H1 (cell line): ENCODE measurements at regions of chr6 and their contacts with region 1.

Region 1: GRCh38 chr6:33802186-33803064 is 1.4 kb downstream of the MLN start:
- DNase-seq: no peak
- H3K4me3 ChIP-seq: no peak overlapping the region
- H3K27ac ChIP-seq: no peak overlapping the region
- H3K4me1 ChIP-seq: peaks cover 0 to 10% (median 3%) of the 10 kb centered on the region in 4 experiments; a peak in 5 of 7 replicates
- H3K27me3 ChIP-seq: peaks cover 0 to 6% (median 1%) of the 10 kb centered on the region in 4 experiments; a peak in 3 of 7 replicates
- CTCF ChIP-seq: no peak
- EP300 ChIP-seq: no peak
- POLR2A ChIP-seq: no peak
- RAD21 ChIP-seq: no peak

Region 2: GRCh38 chr6:33737267-33738026 is 65.0 kb before region 1 on chr6:
- CTCF ChIA-PET with region 1: no interaction called
- POLR2A ChIA-PET with region 1: no interaction called
- DNase-seq: no peak
- H3K4me3 ChIP-seq: no peak overlapping the region
- H3K27ac ChIP-seq: no peak overlapping the region
- H3K4me1 ChIP-seq: no peaks in the 10 kb centered on the region
- H3K27me3 ChIP-seq: no peaks in the 10 kb centered on the region; a peak in 2 of 7 replicates
- CTCF ChIP-seq: no peak
- EP300 ChIP-seq: no peak
- POLR2A ChIP-seq: no peak
- RAD21 ChIP-seq: no peak

Region 3: DNA sequence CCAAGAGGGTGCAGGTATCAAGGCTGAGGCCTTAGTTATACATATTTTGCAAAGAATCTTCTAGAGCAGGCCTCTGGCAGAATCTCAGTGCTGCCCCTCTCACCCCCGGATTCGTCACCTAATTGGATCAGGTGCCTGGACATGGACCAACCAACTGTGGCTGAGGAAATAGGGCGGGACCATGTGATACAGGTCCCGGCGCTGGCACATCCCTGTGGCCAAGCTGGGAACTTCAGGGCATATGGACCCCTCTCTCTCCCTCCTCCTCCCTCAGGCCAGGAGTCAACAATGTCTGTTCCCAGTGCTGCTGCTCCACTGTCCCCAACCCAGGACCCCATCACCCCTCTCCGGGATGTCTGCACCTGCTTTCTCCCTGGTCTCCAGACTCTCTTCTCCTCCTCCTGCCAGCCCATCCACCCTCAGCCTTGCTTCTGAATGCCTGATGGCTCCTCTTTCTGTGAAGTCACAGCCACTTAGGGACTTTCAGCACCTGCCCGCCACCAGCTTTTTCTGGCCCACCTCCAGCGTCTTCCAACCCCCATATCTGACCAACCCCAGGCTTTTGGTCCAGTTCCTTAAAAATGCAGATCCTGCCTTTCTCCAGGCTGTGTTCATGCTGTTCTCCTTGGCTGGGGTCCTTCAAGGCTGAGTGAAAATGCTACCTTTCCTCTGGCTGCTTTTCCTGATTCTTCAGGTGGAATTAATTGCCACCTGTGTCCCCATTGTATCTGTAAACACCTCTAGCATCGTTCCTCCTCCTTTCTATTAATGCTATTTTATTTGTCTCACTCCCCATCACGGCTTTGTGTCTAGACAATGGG is 20.4 kb after region 1 on chr6:
- CTCF ChIA-PET with region 1: interaction called, 17 read pairs
- POLR2A ChIA-PET with region 1: no interaction called
- DNase-seq: peak; percentile 41 to 72
- H3K4me3 ChIP-seq: no peak overlapping the region
- H3K27ac ChIP-seq: peak overlapping the region; percentile 10; the same call in 1 of the 2 replicates
- H3K4me1 ChIP-seq: peaks cover 0 to 11% (median 4%) of the 10 kb centered on the region in 4 experiments; a peak in 3 of 7 replicates
- H3K27me3 ChIP-seq: peaks cover 0 to 3% (median 1%) of the 10 kb centered on the region in 4 experiments; a peak in 4 of 7 replicates
- CTCF ChIP-seq: peak in 2 of 3 experiments; percentile 66 to 89; a peak in 3 of 4 replicates
- EP300 ChIP-seq: no peak
- POLR2A ChIP-seq: no peak
- RAD21 ChIP-seq: peak; percentile 41 to 60